Aorta (tissue), 5 donors: ENCODE measurements at regions of chr1 and their contacts with region 1.

Region 1: GRCh38 chr1:7646981-7647901 is 123.9 kb upstream of the VAMP3 start:
- DNase-seq: peak; percentile 74 to 93
- ATAC-seq: no peak
- H3K4me3 ChIP-seq: no peak overlapping the region
- H3K27ac ChIP-seq: no peak overlapping the region
- H3K4me1 ChIP-seq: no peaks in the 10 kb centered on the region
- H3K27me3 ChIP-seq: no peaks in the 10 kb centered on the region

Region 2: DNA sequence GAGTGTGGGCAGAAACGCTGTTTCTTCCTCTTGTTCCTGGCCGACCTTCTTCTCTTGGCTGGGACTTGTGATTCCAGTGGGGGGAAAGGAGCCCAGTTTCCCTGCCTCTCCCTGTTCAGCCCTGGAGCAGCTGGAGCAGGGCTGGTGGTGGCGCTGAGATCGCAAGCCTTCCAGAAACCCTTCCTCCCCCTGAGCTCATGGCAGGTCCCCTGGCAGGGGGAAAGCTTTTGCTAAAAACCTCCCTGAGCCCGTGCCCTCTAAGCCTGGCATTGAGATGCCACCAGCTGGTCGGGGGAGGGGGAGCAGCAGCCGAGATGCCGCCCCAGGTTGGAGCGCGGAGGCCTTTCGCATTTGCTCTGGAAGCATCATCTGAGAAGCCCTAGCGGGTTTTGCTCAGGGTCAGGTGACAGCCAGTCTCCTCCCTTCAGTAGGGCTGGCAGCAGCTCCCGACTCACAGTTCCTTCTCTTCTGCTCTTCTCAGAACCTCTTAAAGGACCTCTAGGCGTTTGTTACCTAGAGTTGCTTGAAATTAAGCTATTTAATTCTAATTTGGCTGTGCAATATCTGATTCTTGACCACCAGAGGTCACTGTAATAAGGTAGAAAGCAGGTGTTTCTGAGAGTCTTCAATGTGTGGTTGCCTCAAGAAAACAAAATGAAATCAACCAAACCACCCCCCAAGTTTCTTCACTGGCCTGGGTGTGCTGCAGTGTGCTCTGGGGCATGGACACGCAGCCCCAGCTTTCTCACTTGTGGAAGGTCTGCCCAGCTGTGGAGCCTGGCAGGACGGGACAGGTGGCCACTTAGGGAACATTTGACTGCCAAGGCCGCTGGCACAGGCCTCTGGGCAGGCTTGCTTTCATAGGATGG is 604.7 kb before region 1 on chr1:
- intact Hi-C with region 1: loop called (anchors 5 to 10 kb)
- DNase-seq: no peak
- ATAC-seq: no peak
- H3K4me3 ChIP-seq: no peak overlapping the region
- H3K27ac ChIP-seq: no peak overlapping the region
- H3K4me1 ChIP-seq: no peaks in the 10 kb centered on the region
- H3K27me3 ChIP-seq: no peaks in the 10 kb centered on the region

Region 3: DNA sequence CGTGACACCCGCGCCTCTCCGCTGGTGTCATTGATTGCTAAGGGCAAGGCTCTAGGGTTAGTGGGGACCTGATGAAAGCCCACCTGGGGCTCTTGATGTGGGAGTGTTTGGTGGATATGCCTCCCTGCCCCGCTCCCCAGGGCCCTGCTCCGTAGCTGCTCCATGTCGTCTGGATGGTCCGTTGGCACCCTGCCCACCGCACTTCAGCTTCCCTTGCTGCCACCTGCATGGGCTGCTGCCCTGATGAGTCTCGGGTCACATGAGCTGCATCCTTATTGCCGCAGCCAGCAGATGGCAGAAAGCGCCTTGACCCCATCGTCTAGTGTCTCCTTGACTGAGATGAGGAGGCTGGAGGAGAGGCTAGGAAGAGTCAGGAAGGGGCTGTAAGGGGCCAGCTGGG is 422.6 kb before region 1 on chr1:
- intact Hi-C with region 1: loop called in 1 of 2 experiments (anchors 10 kb)
- DNase-seq: no peak
- ATAC-seq: no peak
- H3K4me3 ChIP-seq: no peak overlapping the region
- H3K27ac ChIP-seq: no peak overlapping the region
- H3K4me1 ChIP-seq: no peaks in the 10 kb centered on the region
- H3K27me3 ChIP-seq: no peaks in the 10 kb centered on the region

Region 4: DNA sequence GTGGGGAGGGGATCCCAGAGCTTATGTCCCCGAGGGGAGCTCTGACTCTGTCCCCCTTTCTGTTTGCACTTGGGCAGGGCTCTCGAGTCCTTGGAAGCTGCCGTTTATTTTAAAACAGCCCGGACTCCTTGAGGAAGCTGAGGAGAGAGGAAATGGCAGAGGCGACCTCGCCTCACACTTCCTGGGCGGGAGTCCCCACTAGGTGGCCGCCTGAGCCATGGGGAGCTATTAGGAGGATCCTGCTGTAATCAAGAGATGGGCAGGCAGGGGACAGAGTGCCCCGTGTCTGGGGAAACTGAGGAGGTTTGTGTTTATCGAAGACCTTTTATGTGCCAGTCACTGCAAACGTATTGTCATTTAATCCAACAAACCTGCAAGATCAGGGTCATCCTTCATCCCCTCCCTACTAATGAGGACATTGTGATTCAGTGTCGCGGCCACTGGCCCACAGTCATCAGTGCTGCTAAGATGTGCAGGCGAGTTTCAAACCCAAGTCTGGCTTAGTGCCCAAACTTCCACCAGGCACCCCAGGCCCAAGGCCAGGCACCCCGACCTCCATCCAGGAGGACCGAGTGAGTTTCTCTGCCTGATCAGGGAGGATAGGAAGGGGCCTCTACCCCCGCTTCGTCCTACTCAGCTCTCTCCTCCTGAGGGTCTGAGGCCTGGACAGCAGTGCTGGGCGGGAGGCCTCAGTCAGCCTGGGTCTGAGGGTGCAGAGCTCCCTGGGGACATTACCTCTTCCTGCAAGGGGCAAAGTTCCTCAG is 193.0 kb before region 1 on chr1:
- intact Hi-C with region 1: loop called (anchors 10 kb)
- DNase-seq: no peak
- ATAC-seq: no peak
- H3K4me3 ChIP-seq: no peak overlapping the region
- H3K27ac ChIP-seq: no peak overlapping the region
- H3K4me1 ChIP-seq: no peaks in the 10 kb centered on the region
- H3K27me3 ChIP-seq: no peaks in the 10 kb centered on the region

Region 5: GRCh38 chr1:7538033-7538432 is 109.2 kb before region 1 on chr1:
- intact Hi-C with region 1: no loop called
- DNase-seq: peak; percentile 26 to 34
- ATAC-seq: no peak
- H3K4me3 ChIP-seq: no peak overlapping the region
- H3K27ac ChIP-seq: no peak overlapping the region
- H3K4me1 ChIP-seq: no peaks in the 10 kb centered on the region
- H3K27me3 ChIP-seq: no peaks in the 10 kb centered on the region

Region 6: DNA sequence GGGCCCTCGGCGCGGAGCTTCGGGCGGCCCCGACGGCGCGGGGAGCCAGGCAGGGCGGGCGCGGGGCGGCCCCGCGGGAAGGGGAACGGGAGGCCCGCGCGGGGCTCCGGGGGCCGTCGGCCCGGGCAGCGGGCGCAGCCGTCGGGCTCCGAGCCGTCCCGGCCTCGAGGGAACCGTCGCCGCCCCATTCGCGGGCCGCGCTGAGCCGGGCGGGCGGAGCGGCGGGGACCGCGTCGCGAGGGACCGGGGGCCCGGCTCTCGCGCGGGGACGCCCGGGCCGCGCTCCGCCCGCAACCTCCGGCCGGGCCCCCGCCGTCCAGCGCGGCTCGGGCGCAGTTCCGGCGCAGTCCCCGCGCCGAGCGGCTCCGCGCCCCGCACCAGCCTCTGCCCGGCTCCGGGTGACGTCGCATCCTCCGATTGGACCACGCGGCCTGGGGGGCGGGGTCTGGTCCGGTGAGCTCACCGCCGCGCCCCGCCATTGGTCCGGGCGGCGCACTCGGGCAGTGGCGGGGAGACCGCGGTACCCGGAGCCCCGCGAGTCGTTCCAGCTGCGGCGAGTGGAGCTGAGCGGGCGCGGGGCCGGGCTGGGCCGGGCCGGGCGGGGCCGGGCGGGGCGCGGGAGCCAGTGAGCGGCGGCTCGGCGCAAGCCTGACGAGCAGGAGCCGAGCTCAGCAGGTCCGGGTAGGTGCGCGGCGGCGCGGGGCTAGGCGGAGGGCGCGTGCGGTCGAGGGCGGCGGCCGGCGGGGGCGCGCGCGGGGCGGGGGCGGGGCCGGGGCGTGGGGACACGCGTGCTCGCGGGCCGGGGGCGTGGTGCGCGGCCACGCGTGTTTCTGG is 57.2 kb after region 1 on chr1:
- intact Hi-C with region 1: no loop called
- DNase-seq: peak; percentile 95 to 97
- ATAC-seq: peak; percentile 98
- H3K4me3 ChIP-seq: peak overlapping the region; percentile 46 to 85
- H3K27ac ChIP-seq: no peak overlapping the region
- H3K4me1 ChIP-seq: no peaks in the 10 kb centered on the region
- H3K27me3 ChIP-seq: no peaks in the 10 kb centered on the region

Region 7: GRCh38 chr1:7847599-7847998 is 200.4 kb after region 1 on chr1:
- intact Hi-C with region 1: no loop called
- DNase-seq: no peak
- ATAC-seq: no peak
- H3K4me3 ChIP-seq: no peak overlapping the region
- H3K27ac ChIP-seq: no peak overlapping the region
- H3K4me1 ChIP-seq: no peaks in the 10 kb centered on the region
- H3K27me3 ChIP-seq: no peaks in the 10 kb centered on the region